GM23248 (cell line): ENCODE measurements at regions of chr10 and their contacts with region 1.

Region 1: DNA sequence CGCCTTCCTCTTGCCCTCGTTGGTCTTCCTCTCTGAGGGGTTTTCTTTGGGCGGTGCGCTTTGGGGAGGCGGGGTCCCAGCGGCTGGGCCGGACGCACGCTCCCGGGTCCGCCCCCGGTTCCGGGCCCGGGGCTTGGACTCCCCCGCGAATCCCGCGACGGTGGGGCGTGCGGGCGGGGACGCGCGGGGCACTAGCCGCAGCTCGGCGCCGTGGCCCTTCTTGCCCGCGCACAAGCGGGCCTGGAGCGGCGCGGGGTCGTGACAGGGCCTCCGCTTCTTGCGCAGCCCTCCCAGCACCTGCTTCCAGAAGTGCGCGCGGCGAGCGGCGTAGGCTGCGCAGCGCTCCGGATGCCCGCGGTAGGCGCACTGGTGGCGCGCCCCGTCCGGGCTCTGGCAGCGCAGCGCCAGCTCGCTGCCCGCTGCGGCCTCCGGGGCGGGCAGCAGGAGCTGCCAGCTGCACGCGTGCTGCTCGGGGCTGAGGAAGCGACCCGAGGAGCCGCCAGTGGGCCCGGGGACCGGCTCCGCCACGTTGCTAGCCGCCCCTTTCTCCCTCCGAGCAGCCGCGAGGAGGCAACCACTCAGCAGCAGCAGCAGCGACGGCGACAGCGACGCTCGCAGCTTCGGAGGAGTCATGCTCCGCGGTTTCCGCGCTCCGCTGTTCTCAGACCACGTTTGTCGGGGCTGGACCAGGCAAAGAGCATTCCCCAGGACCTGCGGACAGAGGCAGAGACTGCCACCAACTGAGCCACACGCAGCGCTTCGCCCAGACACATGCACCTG is 759 bp downstream of the FGFBP3 start:
- DNase-seq: peak; percentile 79
- H3K4me3 ChIP-seq: peak overlapping the region; percentile 75
- H3K27ac ChIP-seq: no peak overlapping the region
- H3K4me1 ChIP-seq: peaks cover 5% of the 10 kb centered on the region; the same call in 1 of the 2 replicates
- H3K27me3 ChIP-seq: no peaks in the 10 kb centered on the region

Region 2: DNA sequence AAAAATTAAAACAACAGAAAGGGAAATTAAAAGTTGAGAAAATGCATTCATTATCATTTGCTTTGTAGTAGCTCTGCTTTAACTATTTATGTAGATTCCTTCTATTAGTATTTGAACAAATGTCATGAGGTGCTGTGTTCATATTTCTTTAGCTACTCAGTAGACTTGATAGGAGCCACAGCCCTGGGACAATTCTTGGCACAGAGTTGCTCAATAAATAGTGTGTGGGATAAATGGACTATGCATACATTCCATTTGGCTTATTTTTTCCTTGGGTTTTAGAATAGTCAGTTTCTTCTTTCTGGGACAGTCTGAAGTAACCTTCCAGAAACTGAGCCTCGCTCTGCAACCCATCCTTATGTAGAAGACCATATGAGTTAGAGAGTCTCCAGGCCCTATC is 1023.4 kb before region 1 on chr10:
- in situ Hi-C with region 1: loop called (anchors 25 kb)
- DNase-seq: peak; percentile 86
- H3K4me3 ChIP-seq: peak overlapping the region; percentile 38
- H3K27ac ChIP-seq: peak overlapping the region; percentile 85
- H3K4me1 ChIP-seq: peaks cover 40% of the 10 kb centered on the region
- H3K27me3 ChIP-seq: no peaks in the 10 kb centered on the region